IMR-90 (cell line): ENCODE measurements at regions of chr11 and their contacts with region 1.

Region 1: GRCh38 chr11:65817835-65818742 is 15.7 kb upstream of the SNX32 start:
- DNase-seq: peak; percentile 80
- ATAC-seq: peak; percentile 99
- H3K4me3 ChIP-seq: peak overlapping the region; percentile 94
- H3K27ac ChIP-seq: peak overlapping the region; percentile 39; the same call in 1 of the 2 replicates
- H3K4me1 ChIP-seq: no peaks in the 10 kb centered on the region
- H3K27me3 ChIP-seq: peaks cover 6% of the 10 kb centered on the region
- CTCF ChIP-seq: peak; percentile 99
- POLR2A ChIP-seq: no peak
- RAD21 ChIP-seq: peak; percentile 91

Region 2: GRCh38 chr11:64723117-64723906 is 1094.8 kb before region 1 on chr11 and contains the start of gene NRXN2:
- CTCF ChIA-PET with region 1: no interaction called
- POLR2A ChIA-PET with region 1: no interaction called
- dilution Hi-C with region 1: no loop called
- in situ Hi-C with region 1: no loop called
- intact Hi-C with region 1: no loop called
- DNase-seq: peak; percentile 70
- ATAC-seq: peak; percentile 100
- H3K4me3 ChIP-seq: peak within 1 kb of the TSS; percentile 49
- H3K27ac ChIP-seq: no peak within 1 kb of the TSS
- H3K4me1 ChIP-seq: no peaks in the 10 kb centered on the region
- H3K27me3 ChIP-seq: peaks cover 67% of the 10 kb centered on the region
- CTCF ChIP-seq: peak; percentile 84
- POLR2A ChIP-seq: no peak
- RAD21 ChIP-seq: peak; percentile 76
- total RNA-seq, gene NRXN2: 0.18 and 0.28 TPM in 2 replicates

Region 3: DNA sequence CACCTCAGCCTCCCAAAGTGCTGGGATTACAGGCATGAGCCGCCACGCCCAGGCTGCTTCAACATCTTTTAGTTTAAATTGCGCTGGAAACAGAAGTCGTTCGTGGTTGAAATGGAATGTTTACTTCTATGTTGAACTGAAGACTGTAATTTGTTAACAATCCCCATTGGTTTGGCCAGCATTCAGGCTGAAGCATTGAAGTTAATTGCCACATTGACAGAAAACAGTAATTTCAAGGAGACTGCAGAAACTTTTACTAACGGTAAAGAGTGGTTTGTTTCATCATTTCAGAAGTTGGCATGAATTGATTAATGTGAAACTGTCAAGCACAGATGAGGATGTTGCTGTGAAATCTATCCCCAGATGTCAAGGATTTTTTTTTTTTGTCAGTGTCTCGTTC is 51.6 kb before region 1 on chr11:
- CTCF ChIA-PET with region 1: interaction called, 10 read pairs
- POLR2A ChIA-PET with region 1: no interaction called
- dilution Hi-C with region 1: no loop called
- in situ Hi-C with region 1: no loop called
- intact Hi-C with region 1: loop called (anchors 5 kb)
- DNase-seq: peak; percentile 6
- ATAC-seq: 0 out of 2 replicates have a peak, but pooled peaks have one; percentile 11
- H3K4me3 ChIP-seq: no peak overlapping the region
- H3K27ac ChIP-seq: no peak overlapping the region
- H3K4me1 ChIP-seq: no peaks in the 10 kb centered on the region
- H3K27me3 ChIP-seq: no peaks in the 10 kb centered on the region
- CTCF ChIP-seq: no peak
- POLR2A ChIP-seq: no peak
- RAD21 ChIP-seq: no peak

Region 4: DNA sequence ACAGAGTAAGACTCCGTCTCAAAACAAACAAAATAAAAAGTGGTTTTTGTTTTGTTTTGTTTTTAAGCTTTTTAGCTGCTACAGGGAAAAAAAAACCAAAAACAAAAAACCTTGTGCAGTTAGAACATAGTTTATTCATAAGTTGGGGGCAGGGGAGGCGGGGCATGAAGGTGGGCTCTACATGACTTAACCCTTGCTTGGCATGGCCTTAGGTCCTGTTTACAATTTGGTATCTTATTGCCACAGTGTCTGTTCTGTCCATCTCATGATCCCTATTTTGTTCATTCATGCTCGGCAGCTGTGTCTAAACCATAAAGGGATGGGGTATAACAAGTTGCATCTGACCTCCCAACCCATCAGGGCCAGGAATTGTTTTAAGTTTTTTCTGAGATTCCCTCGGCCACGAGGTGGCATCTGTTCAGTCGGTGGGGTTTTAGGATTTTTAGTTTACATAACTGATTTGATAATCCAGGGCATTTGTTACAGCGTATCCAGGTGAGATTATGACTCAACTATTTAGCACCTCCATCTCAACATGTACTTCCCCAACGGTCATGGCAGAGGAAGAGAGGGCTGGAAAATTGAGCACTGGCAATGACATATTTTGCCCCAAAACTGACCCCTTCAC is 44.2 kb before region 1 on chr11:
- CTCF ChIA-PET with region 1: interaction called, 10 read pairs
- POLR2A ChIA-PET with region 1: no interaction called
- dilution Hi-C with region 1: no loop called
- in situ Hi-C with region 1: no loop called
- intact Hi-C with region 1: loop called (anchors 5 kb)
- DNase-seq: no peak
- ATAC-seq: no peak
- H3K4me3 ChIP-seq: no peak overlapping the region
- H3K27ac ChIP-seq: no peak overlapping the region
- H3K4me1 ChIP-seq: no peaks in the 10 kb centered on the region
- H3K27me3 ChIP-seq: no peaks in the 10 kb centered on the region
- CTCF ChIP-seq: 0 out of 2 replicates have a peak, but pooled peaks have one; percentile 6
- POLR2A ChIP-seq: no peak
- RAD21 ChIP-seq: no peak

Region 5: GRCh38 chr11:65779851-65780577 is 38.1 kb before region 1 on chr11:
- CTCF ChIA-PET with region 1: interaction called, 7 read pairs
- POLR2A ChIA-PET with region 1: no interaction called
- dilution Hi-C with region 1: no loop called
- in situ Hi-C with region 1: no loop called
- intact Hi-C with region 1: loop called (anchors 1 kb)
- DNase-seq: peak; percentile 67
- ATAC-seq: peak; percentile 84
- H3K4me3 ChIP-seq: peak overlapping the region; percentile 80
- H3K27ac ChIP-seq: peak overlapping the region; percentile 64
- H3K4me1 ChIP-seq: peaks cover 3% of the 10 kb centered on the region; the same call in 1 of the 2 replicates
- H3K27me3 ChIP-seq: peaks cover 19% of the 10 kb centered on the region
- CTCF ChIP-seq: peak; percentile 99
- POLR2A ChIP-seq: no peak; the same call in 1 of the 2 replicates
- RAD21 ChIP-seq: peak; percentile 69